HepG2 (cell line): ENCODE measurements at regions of chr18 and their contacts with region 1.

Region 1: DNA sequence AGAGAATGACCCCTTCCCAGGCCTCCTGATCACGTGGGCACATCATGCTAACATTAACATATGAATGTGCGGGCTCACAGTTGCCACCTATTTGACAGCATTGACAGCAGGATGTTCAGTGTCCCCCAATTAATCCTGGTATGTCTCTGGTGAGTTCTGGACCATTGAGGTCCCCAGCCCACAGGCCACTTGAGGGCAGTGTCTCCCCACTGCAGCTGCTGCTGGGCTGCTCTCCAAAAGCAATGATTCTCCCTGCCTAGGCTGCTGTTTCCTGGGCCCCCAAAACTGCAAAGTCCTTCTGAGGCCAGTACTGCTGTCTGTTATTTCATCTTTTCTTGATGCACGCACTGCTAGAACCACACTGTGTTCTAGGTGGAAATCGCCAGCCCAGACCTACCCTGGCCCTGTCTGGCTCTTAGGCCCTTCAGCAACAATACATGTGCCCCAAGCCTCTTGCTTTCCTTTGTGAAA is 52.7 kb upstream of the MAPK4 start:
- DNase-seq: peak; percentile 13
- ATAC-seq: peak; percentile 97
- H3K4me3 ChIP-seq: no peak overlapping the region
- H3K27ac ChIP-seq: no peak overlapping the region
- H3K4me1 ChIP-seq: no peaks in the 10 kb centered on the region
- H3K27me3 ChIP-seq: 0 out of 5 replicates have a peak, but pooled peaks cover 0 to 2% of the 10 kb centered on the region in 2 experiments
- CTCF ChIP-seq: peak; percentile 88
- EP300 ChIP-seq: no peak
- POLR2A ChIP-seq: no peak
- RAD21 ChIP-seq: peak; percentile 81

Region 2: GRCh38 chr18:48875942-48876511 is 1631.1 kb before region 1 on chr18:
- CTCF ChIA-PET with region 1: no interaction called
- POLR2A ChIA-PET with region 1: no interaction called
- in situ Hi-C with region 1: no loop called
- intact Hi-C with region 1: no loop called
- DNase-seq: peak; percentile 69
- ATAC-seq: peak; percentile 83
- H3K4me3 ChIP-seq: peak overlapping the region in 2 of 3 experiments; percentile 14 to 57; a peak in 3 of 6 replicates
- H3K27ac ChIP-seq: no peak overlapping the region
- H3K4me1 ChIP-seq: peaks cover 76% of the 10 kb centered on the region
- H3K27me3 ChIP-seq: no peaks in the 10 kb centered on the region; a peak in 1 of 5 replicates
- CTCF ChIP-seq: peak; percentile 15; the same call in 1 of the 2 replicates
- EP300 ChIP-seq: no peak
- POLR2A ChIP-seq: no peak
- RAD21 ChIP-seq: peak; percentile 67

Region 3: GRCh38 chr18:50454387-50454988 is 52.7 kb before region 1 on chr18:
- CTCF ChIA-PET with region 1: no interaction called
- POLR2A ChIA-PET with region 1: no interaction called
- in situ Hi-C with region 1: no loop called
- intact Hi-C with region 1: no loop called
- DNase-seq: no peak
- ATAC-seq: no peak
- H3K4me3 ChIP-seq: no peak overlapping the region
- H3K27ac ChIP-seq: no peak overlapping the region
- H3K4me1 ChIP-seq: peaks cover 14% of the 10 kb centered on the region
- H3K27me3 ChIP-seq: no peaks in the 10 kb centered on the region; a peak in 2 of 5 replicates
- CTCF ChIP-seq: no peak
- EP300 ChIP-seq: no peak
- POLR2A ChIP-seq: no peak
- RAD21 ChIP-seq: no peak

Region 4: DNA sequence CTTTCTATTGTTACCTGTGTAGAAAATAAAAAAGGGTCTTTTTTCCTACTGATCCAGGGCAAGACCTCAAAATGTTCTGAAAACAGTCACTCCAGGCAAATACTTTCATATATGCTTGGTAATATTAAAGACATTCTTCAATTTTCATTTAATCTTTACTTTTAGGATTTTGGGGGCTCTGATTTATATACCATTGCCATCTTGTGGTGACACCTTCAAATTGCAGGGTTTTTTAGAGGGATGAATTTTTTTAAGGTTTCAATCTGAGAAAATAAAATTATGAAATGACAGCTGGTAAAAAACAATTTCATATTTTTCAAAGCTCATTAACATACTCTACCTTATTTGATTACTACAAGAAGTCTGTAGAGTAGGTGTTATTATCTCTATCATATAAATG is 79.6 kb after region 1 on chr18:
- CTCF ChIA-PET with region 1: interaction called, 3 read pairs
- POLR2A ChIA-PET with region 1: no interaction called
- in situ Hi-C with region 1: no loop called
- intact Hi-C with region 1: loop called (anchors 5 kb)
- DNase-seq: no peak
- ATAC-seq: no peak
- H3K4me3 ChIP-seq: no peak overlapping the region
- H3K27ac ChIP-seq: no peak overlapping the region
- H3K4me1 ChIP-seq: no peaks in the 10 kb centered on the region
- H3K27me3 ChIP-seq: no peaks in the 10 kb centered on the region
- CTCF ChIP-seq: 0 out of 2 replicates have a peak, but pooled peaks have one; percentile 5
- EP300 ChIP-seq: no peak
- POLR2A ChIP-seq: no peak
- RAD21 ChIP-seq: no peak

Region 5: DNA sequence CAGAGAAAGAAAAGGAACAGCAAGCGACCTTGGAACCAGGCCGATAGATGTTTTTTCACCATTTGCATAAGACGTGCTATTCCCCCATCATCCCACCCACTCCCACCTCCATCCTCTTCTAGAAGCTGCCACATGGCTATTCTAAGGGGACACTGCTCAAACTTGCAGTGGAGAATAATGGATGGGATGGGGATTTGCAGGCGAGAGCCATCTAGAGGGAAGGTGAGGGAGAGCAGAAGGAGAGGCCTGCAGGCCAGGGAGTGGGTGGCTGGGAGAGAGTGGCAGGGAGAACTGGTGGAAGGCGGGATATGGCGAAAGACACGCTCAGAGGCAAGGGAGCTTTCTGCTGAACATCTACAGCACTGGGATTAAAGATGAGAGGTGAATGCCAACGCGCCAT is 137.7 kb after region 1 on chr18:
- CTCF ChIA-PET with region 1: interaction called, 7 read pairs
- POLR2A ChIA-PET with region 1: no interaction called
- in situ Hi-C with region 1: no loop called
- intact Hi-C with region 1: loop called (anchors 1 kb)
- DNase-seq: peak; percentile 33
- ATAC-seq: peak; percentile 99
- H3K4me3 ChIP-seq: no peak overlapping the region
- H3K27ac ChIP-seq: no peak overlapping the region
- H3K4me1 ChIP-seq: no peaks in the 10 kb centered on the region
- H3K27me3 ChIP-seq: no peaks in the 10 kb centered on the region
- CTCF ChIP-seq: peak; percentile 72
- EP300 ChIP-seq: no peak
- POLR2A ChIP-seq: no peak
- RAD21 ChIP-seq: no peak

Region 6: GRCh38 chr18:50786864-50787263 is 279.7 kb after region 1 on chr18:
- CTCF ChIA-PET with region 1: interaction called, 10 read pairs
- POLR2A ChIA-PET with region 1: no interaction called
- in situ Hi-C with region 1: loop called (anchors 10 kb)
- intact Hi-C with region 1: loop called (anchors 1 kb)
- DNase-seq: no peak
- ATAC-seq: no peak
- H3K4me3 ChIP-seq: no peak overlapping the region
- H3K27ac ChIP-seq: no peak overlapping the region
- H3K4me1 ChIP-seq: no peaks in the 10 kb centered on the region
- H3K27me3 ChIP-seq: peaks cover 0 to 1% of the 10 kb centered on the region in 2 experiments; a peak in 1 of 5 replicates
- CTCF ChIP-seq: no peak
- EP300 ChIP-seq: no peak
- POLR2A ChIP-seq: no peak
- RAD21 ChIP-seq: no peak